ENCODE measurements at regions of chr3 and their contacts with region 1.

Region 1: GRCh38 chr3:33074217-33075067 is 22.5 kb downstream of the GLB1 start:
- DNase-seq: peak; percentile 31 to 79 (median 70)
- ATAC-seq: peak; percentile 73
- H3K4me3 ChIP-seq: no peak overlapping the region
- H3K4me3 Mint-ChIP-seq: no peak overlapping the region
- H3K27ac ChIP-seq: no peak overlapping the region
- H3K27ac Mint-ChIP-seq: no peak overlapping the region
- H3K4me1 ChIP-seq: no peaks in the 10 kb centered on the region
- H3K4me1 Mint-ChIP-seq: peaks cover 9% of the 10 kb centered on the region
- H3K27me3 ChIP-seq: no peaks in the 10 kb centered on the region
- H3K27me3 Mint-ChIP-seq: no peaks in the 10 kb centered on the region
- CTCF ChIP-seq: peak; percentile 77

Region 2: GRCh38 chr3:32510075-32510724 is 564.2 kb before region 1 on chr3:
- CTCF ChIA-PET with region 1: no interaction called
- POLR2A ChIA-PET with region 1: no interaction called
- intact Hi-C with region 1: loop called in 1 of 2 experiments (anchors 5 kb)
- DNase-seq: peak; percentile 33 to 78 (median 66)
- ATAC-seq: peak; percentile 98
- H3K4me3 ChIP-seq: no peak overlapping the region
- H3K4me3 Mint-ChIP-seq: no peak overlapping the region
- H3K27ac ChIP-seq: no peak overlapping the region
- H3K27ac Mint-ChIP-seq: no peak overlapping the region
- H3K4me1 ChIP-seq: no peaks in the 10 kb centered on the region
- H3K4me1 Mint-ChIP-seq: no peaks in the 10 kb centered on the region
- H3K27me3 ChIP-seq: no peaks in the 10 kb centered on the region
- H3K27me3 Mint-ChIP-seq: no peaks in the 10 kb centered on the region
- CTCF ChIP-seq: peak; percentile 83

Region 3: DNA sequence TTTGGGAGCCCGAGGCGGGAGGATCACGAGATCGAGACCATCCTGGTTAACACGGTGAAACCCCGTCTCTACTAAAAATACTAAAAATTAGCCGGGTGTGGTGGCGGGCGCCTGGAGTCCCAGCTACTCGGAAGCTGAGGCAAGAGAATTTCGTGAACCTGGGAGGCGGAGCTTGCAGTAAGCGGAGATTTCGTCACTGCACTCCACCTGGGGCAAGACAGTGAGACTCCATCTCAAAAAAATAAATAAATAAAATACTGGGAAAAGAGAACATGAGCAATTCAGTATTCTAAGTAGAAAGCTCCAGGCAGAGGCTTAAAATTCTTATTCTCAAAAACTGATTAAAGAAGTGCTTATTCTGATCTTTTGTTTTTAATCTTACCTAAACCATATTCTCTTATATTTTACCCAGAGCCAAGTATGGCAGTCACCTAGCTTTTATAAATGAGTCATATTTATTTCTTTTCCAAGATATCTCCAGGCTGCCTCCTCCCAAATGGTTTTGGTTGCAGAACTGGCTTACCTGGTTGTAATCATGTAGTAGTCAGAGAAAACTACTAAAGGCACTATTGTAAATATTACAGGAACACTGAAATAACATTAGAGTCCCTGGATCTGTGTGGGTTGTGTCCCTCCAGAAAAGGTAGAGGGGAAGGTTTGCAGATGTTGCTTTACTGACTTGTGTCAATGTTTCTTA is 458.0 kb before region 1 on chr3:
- CTCF ChIA-PET with region 1: no interaction called
- POLR2A ChIA-PET with region 1: no interaction called
- intact Hi-C with region 1: no loop called
- DNase-seq: no peak
- ATAC-seq: no peak
- H3K4me3 ChIP-seq: no peak overlapping the region
- H3K4me3 Mint-ChIP-seq: no peak overlapping the region
- H3K27ac ChIP-seq: no peak overlapping the region
- H3K27ac Mint-ChIP-seq: no peak overlapping the region
- H3K4me1 ChIP-seq: no peaks in the 10 kb centered on the region
- H3K4me1 Mint-ChIP-seq: no peaks in the 10 kb centered on the region
- H3K27me3 ChIP-seq: no peaks in the 10 kb centered on the region
- H3K27me3 Mint-ChIP-seq: peaks cover 11% of the 10 kb centered on the region
- CTCF ChIP-seq: no peak

Region 4: DNA sequence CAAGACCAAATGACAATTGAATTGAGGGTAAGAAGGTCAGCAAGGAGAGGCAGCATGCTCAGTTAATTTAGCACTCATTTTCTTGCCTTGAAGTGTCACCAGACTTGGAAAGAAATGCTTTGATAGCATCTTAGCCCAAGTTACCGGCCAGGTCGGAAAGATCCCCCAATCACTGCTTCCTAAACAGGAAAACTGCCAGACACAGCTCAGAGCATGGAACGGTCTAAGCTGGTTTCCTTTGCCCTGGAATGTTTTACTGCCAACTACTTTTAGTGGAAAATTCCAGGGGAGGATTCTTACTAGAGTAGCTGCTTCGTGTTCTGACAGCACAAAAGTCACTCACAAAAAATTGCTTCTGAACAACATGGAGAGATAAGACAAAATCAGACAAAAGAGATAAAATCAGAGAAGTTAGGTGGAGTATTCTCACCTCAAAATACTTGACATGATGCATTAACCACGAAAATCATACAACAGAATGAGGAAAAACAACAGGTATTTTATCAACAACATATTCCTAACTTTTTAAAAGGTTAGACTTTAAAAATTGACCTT is 57.5 kb before region 1 on chr3:
- CTCF ChIA-PET with region 1: interaction called, 13 read pairs
- POLR2A ChIA-PET with region 1: no interaction called
- intact Hi-C with region 1: loop called (anchors 5 kb)
- DNase-seq: no peak
- ATAC-seq: no peak
- H3K4me3 ChIP-seq: no peak overlapping the region
- H3K4me3 Mint-ChIP-seq: no peak overlapping the region
- H3K27ac ChIP-seq: no peak overlapping the region
- H3K27ac Mint-ChIP-seq: peak overlapping the region; percentile 15
- H3K4me1 ChIP-seq: no peaks in the 10 kb centered on the region
- H3K4me1 Mint-ChIP-seq: peaks cover 22% of the 10 kb centered on the region
- H3K27me3 ChIP-seq: no peaks in the 10 kb centered on the region
- H3K27me3 Mint-ChIP-seq: no peaks in the 10 kb centered on the region
- CTCF ChIP-seq: no peak

Region 5: DNA sequence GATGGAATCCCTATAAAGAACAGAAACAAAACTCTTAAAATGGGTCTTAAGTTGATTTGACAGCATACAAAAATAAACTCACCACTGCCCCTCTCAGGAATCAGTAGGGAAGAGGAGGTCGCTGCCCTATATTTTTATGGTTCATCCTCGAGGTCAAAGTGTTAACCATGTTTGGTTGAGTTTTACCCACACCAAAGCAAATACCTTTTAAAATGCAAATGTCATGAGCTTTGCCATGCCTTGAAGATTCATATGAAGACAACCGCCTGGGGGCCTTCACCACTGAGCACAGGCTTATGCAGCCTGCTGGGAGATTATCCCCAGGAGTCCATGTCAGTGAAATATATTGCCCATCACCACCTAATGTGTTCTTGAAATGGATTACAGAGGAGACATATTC is 43.6 kb before region 1 on chr3:
- CTCF ChIA-PET with region 1: interaction called, 23 read pairs
- POLR2A ChIA-PET with region 1: interaction called, 3 read pairs
- intact Hi-C with region 1: no loop called
- DNase-seq: peak in 3 of 9 experiments; percentile 33 to 70 (median 61)
- ATAC-seq: peak; percentile 85
- H3K4me3 ChIP-seq: no peak overlapping the region
- H3K4me3 Mint-ChIP-seq: no peak overlapping the region
- H3K27ac ChIP-seq: no peak overlapping the region
- H3K27ac Mint-ChIP-seq: no peak overlapping the region
- H3K4me1 ChIP-seq: no peaks in the 10 kb centered on the region
- H3K4me1 Mint-ChIP-seq: peaks cover 11% of the 10 kb centered on the region
- H3K27me3 ChIP-seq: no peaks in the 10 kb centered on the region
- H3K27me3 Mint-ChIP-seq: no peaks in the 10 kb centered on the region
- CTCF ChIP-seq: no peak

Region 6: GRCh38 chr3:33047842-33048834 is 26.3 kb before region 1 on chr3:
- CTCF ChIA-PET with region 1: interaction called, 45 read pairs
- POLR2A ChIA-PET with region 1: interaction called, 4 read pairs
- intact Hi-C with region 1: loop called in 1 of 2 experiments (anchors 5 kb)
- DNase-seq: peak; percentile 21 to 87 (median 58)
- ATAC-seq: peak; percentile 86
- H3K4me3 ChIP-seq: no peak overlapping the region
- H3K4me3 Mint-ChIP-seq: peak overlapping the region; percentile 66
- H3K27ac ChIP-seq: peak overlapping the region in 1 of 2 experiments; percentile 14
- H3K27ac Mint-ChIP-seq: peak overlapping the region; percentile 92
- H3K4me1 ChIP-seq: peaks cover 56% of the 10 kb centered on the region
- H3K4me1 Mint-ChIP-seq: peaks cover 73% of the 10 kb centered on the region
- H3K27me3 ChIP-seq: no peaks in the 10 kb centered on the region
- H3K27me3 Mint-ChIP-seq: no peaks in the 10 kb centered on the region
- CTCF ChIP-seq: no peak

Region 7: GRCh38 chr3:33063651-33064051 is 10.8 kb before region 1 on chr3:
- CTCF ChIA-PET with region 1: interaction called, 24 read pairs
- POLR2A ChIA-PET with region 1: no interaction called
- intact Hi-C with region 1: no loop called
- DNase-seq: peak in 8 of 9 experiments; percentile 24 to 62 (median 43)
- ATAC-seq: peak; percentile 56
- H3K4me3 ChIP-seq: no peak overlapping the region
- H3K4me3 Mint-ChIP-seq: peak overlapping the region; percentile 1
- H3K27ac ChIP-seq: peak overlapping the region in 1 of 2 experiments; percentile 54
- H3K27ac Mint-ChIP-seq: peak overlapping the region; percentile 77
- H3K4me1 ChIP-seq: peaks cover 20% of the 10 kb centered on the region
- H3K4me1 Mint-ChIP-seq: peaks cover 43% of the 10 kb centered on the region
- H3K27me3 ChIP-seq: no peaks in the 10 kb centered on the region
- H3K27me3 Mint-ChIP-seq: no peaks in the 10 kb centered on the region
- CTCF ChIP-seq: no peak

Region 8: DNA sequence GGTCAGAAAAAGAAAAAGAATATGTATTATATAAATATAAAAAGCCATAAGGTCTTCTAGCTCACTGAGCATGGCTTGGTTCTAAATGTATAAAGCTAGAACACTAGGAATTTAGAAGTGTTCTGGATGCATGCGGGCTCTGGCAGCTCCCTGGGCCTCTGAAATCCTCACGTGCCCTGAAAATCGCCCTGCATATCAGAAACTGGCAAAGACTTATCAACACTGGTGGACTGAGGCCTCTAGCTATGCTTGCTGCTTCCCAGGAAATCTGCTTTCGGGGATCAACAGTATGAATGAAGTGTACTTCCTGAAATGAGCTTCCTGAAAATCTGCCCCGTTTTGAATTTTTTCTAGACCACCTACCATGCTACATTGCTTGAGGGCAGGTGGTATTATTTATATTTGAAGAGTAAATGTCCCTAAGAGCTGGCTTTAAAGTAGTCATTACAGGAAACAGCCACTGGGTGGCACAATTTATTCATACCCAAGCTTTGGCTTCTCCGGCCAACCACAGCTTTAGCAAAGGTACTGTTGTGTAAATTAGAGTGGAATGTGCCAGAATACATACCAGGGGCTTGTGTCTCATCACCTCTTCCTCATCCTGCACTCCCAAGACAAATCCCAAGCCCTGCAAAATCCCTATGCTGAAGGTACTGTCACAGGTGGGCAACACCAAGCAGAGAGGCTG is 57.0 kb after region 1 on chr3:
- CTCF ChIA-PET with region 1: interaction called, 12 read pairs
- POLR2A ChIA-PET with region 1: no interaction called
- intact Hi-C with region 1: no loop called
- DNase-seq: peak in 4 of 9 experiments; percentile 21 to 61 (median 40)
- ATAC-seq: peak; percentile 69
- H3K4me3 ChIP-seq: no peak overlapping the region
- H3K4me3 Mint-ChIP-seq: no peak overlapping the region
- H3K27ac ChIP-seq: no peak overlapping the region
- H3K27ac Mint-ChIP-seq: no peak overlapping the region
- H3K4me1 ChIP-seq: no peaks in the 10 kb centered on the region
- H3K4me1 Mint-ChIP-seq: peaks cover 3% of the 10 kb centered on the region
- H3K27me3 ChIP-seq: no peaks in the 10 kb centered on the region
- H3K27me3 Mint-ChIP-seq: no peaks in the 10 kb centered on the region
- CTCF ChIP-seq: peak; percentile 84

Region 9: DNA sequence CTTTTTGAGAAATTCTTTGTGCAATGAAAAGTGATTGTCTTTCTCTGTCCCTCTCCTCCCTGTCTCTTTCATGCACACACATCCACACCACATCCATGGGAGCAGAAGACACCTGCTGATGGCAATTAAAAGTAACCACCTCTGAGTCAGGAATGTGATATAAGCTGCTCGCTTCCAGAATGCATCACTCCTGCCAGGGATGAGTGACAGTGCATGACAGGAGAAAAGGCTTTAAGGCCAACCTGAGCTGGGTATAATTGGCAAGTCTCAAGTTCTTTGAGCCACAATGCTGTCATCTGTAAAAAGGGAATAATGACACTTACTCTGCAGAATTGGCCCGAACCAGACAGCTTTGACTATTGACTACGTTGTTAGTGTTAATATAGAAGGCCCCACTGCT is 306.2 kb after region 1 on chr3:
- CTCF ChIA-PET with region 1: no interaction called
- POLR2A ChIA-PET with region 1: no interaction called
- intact Hi-C with region 1: no loop called
- DNase-seq: no peak
- ATAC-seq: no peak
- H3K4me3 ChIP-seq: no peak overlapping the region
- H3K4me3 Mint-ChIP-seq: no peak overlapping the region
- H3K27ac ChIP-seq: no peak overlapping the region
- H3K27ac Mint-ChIP-seq: no peak overlapping the region
- H3K4me1 ChIP-seq: no peaks in the 10 kb centered on the region
- H3K4me1 Mint-ChIP-seq: peaks cover 4% of the 10 kb centered on the region
- H3K27me3 ChIP-seq: no peaks in the 10 kb centered on the region
- H3K27me3 Mint-ChIP-seq: no peaks in the 10 kb centered on the region
- CTCF ChIP-seq: no peak